Lower leg skin (tissue), 4 donors: ENCODE measurements at regions of chr6 and their contacts with region 1.

Region 1: GRCh38 chr6:2542858-2543218 is 207.9 kb downstream of the MYLK4 start:
- DNase-seq: no peak
- H3K4me3 ChIP-seq: no peak overlapping the region
- CTCF ChIP-seq: no peak
- POLR2A ChIP-seq: no peak

Region 2: GRCh38 chr6:961407-961960 is 1581.4 kb before region 1 on chr6:
- intact Hi-C with region 1: loop called (anchors 10 kb)
- DNase-seq: no peak
- H3K4me3 ChIP-seq: no peak overlapping the region
- CTCF ChIP-seq: no peak
- POLR2A ChIP-seq: no peak

Region 3: DNA sequence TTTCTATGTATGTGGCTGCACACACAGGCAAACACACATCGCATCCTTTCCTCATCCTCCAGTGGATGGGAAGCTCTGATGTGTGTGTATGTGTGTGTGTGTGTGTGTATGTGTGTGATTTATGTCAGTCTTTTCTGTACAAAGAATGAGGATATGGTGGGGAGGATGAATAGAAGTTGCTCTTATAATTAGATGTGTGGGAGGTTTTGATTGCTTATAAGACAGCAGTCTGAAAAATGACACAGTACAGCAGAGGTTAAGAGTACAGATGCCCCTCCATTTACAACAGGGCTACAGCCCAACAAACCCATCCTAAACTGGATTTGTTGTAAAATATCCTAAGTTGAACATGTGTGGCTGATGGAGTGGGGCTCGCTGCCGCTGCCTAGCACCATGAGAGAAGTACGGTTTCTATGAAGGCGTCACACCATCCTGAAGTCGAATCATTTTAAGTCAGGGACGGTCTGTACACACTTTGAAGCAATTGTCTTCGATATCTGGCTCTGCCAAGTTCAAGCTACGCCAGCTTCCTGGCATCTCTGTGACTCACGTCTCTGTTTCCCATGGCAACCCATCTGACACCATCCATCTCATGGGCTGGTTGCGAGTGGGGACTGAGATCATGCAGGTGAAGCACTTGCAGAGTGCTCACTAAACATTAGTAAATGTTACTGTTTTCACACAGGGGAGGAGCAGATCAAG is 44.8 kb before region 1 on chr6:
- intact Hi-C with region 1: no loop called
- DNase-seq: peak in 1 of 2 donors; percentile 63
- H3K4me3 ChIP-seq: no peak overlapping the region
- CTCF ChIP-seq: no peak
- POLR2A ChIP-seq: no peak